ENCODE measurements at regions of chr12 and their contacts with region 1.

Region 1: DNA sequence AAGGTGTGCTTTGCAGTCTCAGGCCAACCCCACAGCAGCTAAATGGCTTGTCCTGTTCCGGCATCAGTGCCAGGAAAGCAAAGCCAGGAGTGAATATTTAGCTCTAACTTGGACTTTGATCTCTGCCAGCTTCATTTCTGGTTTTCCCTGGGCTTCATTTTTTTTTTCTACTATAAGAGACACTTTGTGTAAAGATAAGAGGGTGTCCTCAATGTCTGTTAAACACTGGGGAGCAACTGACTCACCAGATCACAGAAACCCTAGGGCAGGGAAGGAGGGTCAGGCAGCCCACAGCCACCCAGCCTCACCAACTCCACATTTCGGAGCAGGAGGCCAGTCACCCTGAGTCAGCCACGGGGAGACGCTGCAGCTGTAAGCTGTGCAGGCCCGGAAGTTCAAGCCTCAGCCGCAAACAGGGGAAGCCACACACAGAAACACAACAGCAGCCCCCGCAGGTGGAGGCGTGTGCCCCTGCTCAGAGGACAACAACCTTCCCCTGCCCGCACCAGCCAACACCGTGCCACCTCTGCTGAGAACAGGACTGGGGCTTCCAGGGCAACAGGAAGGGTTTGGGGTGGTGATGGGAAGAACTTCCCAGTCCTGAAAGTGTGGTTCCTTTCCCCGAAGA is 6.3 kb downstream of the TNFRSF1A start:
- DNase-seq: no peak
- H3K4me3 ChIP-seq: peak overlapping the region; percentile 87 to 94
- H3K27ac ChIP-seq: peak overlapping the region; percentile 99
- H3K4me1 ChIP-seq: peaks cover 71% of the 10 kb centered on the region
- H3K27me3 ChIP-seq: no peaks in the 10 kb centered on the region
- CTCF ChIP-seq: peak in 2 of 3 experiments; percentile 28 to 33
- POLR2A ChIP-seq: no peak

Region 2: DNA sequence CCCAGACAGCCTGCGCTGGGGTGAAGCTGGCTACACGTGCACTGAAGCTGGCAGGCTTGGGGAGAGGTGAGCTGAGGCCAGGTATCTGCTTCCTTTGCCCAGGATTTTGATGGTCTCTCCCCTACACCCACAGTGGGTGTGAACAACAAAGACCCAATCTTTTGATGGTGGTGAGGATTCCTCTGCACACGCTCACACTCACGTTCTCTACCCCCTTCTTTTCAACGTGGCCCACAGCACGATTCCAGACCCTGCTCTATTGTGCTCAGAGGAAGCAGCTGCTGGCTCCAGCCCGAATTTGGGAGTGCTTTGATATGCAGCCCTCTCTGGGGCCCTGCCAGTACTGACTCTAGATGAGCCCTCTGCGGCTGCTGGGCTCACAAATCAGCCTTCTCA is 130.4 kb before region 1 on chr12:
- intact Hi-C with region 1: no loop called
- DNase-seq: no peak
- H3K4me3 ChIP-seq: peak overlapping the region in 1 of 2 donors; percentile 6
- H3K27ac ChIP-seq: peak overlapping the region; percentile 91
- H3K4me1 ChIP-seq: peaks cover 91% of the 10 kb centered on the region
- H3K27me3 ChIP-seq: no peaks in the 10 kb centered on the region
- CTCF ChIP-seq: no peak
- POLR2A ChIP-seq: no peak

Region 3: DNA sequence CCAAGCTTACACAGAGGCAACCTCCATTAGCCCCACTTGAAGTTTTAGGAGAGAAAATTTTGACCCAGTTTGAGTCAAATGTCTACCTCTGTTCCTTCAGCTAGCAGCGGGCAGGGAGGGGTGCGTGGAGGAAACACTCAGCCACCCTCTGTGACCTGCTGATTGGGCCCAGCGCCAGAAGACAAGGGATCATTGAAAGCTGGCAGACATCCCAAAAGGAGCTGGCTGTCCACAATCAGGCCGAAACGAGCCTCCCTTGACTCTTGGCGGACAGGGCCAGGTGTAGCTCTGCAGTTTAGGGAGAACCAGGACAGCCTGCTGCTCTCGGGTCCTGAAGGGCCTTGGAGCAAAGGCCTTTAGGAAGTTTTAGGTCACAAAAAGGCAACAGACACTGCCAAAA is 94.1 kb before region 1 on chr12:
- intact Hi-C with region 1: no loop called
- DNase-seq: no peak
- H3K4me3 ChIP-seq: no peak overlapping the region
- H3K27ac ChIP-seq: no peak overlapping the region
- H3K4me1 ChIP-seq: peaks cover 10% of the 10 kb centered on the region
- H3K27me3 ChIP-seq: no peaks in the 10 kb centered on the region
- CTCF ChIP-seq: no peak
- POLR2A ChIP-seq: no peak

Region 4: GRCh38 chr12:6363611-6364328 is 28.2 kb after region 1 on chr12:
- intact Hi-C with region 1: loop called (anchors 1 kb)
- DNase-seq: peak in 1 of 2 donors; percentile 89
- H3K4me3 ChIP-seq: peak overlapping the region; percentile 61 to 67
- H3K27ac ChIP-seq: peak overlapping the region; percentile 98
- H3K4me1 ChIP-seq: peaks cover 31% of the 10 kb centered on the region
- H3K27me3 ChIP-seq: no peaks in the 10 kb centered on the region
- CTCF ChIP-seq: no peak
- POLR2A ChIP-seq: no peak

Region 5: GRCh38 chr12:6383572-6384498 is 48.3 kb after region 1 on chr12 and contains the start of gene LTBR:
- intact Hi-C with region 1: loop called (anchors 2 kb)
- DNase-seq: peak in 1 of 2 donors; percentile 97
- H3K4me3 ChIP-seq: peak within 1 kb of the TSS; percentile 84 to 94
- H3K27ac ChIP-seq: peak within 1 kb of the TSS; percentile 99
- H3K4me1 ChIP-seq: peaks cover 67% of the 10 kb centered on the region
- H3K27me3 ChIP-seq: no peaks in the 10 kb centered on the region
- CTCF ChIP-seq: peak in 1 of 3 experiments; percentile 5
- POLR2A ChIP-seq: peak in 1 of 2 donors; percentile 65
- total RNA-seq, gene LTBR: 146 TPM

Region 6: DNA sequence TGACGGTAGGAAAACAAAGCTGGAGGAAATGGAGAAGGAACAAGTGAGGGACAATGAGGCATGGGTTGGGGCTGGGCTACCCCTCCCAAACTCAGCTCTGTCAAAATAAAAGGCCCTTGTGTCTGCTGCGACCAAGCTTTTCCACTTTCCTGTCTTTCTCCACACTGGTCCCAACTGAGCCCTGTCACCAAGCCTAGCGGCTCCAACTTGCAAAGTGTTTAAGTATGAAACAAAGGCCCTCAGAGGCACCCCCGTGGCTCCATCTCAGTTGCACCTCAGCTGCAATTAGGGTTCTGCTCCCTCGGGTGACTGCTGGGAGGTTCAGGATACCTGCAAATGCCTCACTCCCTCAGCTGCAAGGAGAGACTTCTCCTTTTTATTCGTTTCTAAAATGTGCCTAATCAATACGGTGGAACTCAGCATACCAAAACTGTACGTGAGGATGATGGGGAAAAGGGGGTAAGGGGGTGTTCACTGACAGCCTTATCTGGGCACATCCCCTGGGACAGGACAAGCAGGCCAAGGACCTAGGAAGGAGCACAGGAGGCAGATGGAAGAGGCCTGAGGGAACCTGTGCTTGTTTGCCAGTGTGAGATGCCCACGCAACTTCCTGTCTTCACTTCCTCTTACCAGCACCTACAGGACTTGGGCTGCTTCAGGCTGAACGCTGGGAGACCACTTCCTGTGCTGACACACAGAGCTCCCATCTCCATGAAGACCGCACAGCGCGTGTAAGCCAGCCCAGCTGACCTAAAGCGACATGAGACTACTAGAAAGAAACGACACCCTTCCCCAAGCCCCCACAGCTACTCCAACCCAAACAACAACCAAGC is 126.1 kb after region 1 on chr12:
- intact Hi-C with region 1: loop called (anchors 5 kb)
- DNase-seq: no peak
- H3K4me3 ChIP-seq: no peak overlapping the region
- H3K27ac ChIP-seq: no peak overlapping the region
- H3K4me1 ChIP-seq: peaks cover 19% of the 10 kb centered on the region
- H3K27me3 ChIP-seq: no peaks in the 10 kb centered on the region
- CTCF ChIP-seq: no peak
- POLR2A ChIP-seq: no peak

Region 7: GRCh38 chr12:6533923-6534694 is 198.5 kb after region 1 on chr12 and contains the start of gene GAPDH:
- intact Hi-C with region 1: loop called (anchors 5 kb)
- DNase-seq: peak in 1 of 2 donors; percentile 95
- H3K4me3 ChIP-seq: peak within 1 kb of the TSS; percentile 65 to 96
- H3K27ac ChIP-seq: peak within 1 kb of the TSS; percentile 87
- H3K4me1 ChIP-seq: peaks cover 49% of the 10 kb centered on the region
- H3K27me3 ChIP-seq: no peaks in the 10 kb centered on the region
- CTCF ChIP-seq: no peak
- POLR2A ChIP-seq: peak in 1 of 2 donors; percentile 87
- total RNA-seq, gene GAPDH: 2,297 TPM

Measured in vagina (tissue), 2 donors.